ENCODE measurements at regions of chr3 and their contacts with region 1.

Region 1: GRCh38 chr3:71130471-71131374 is 452.8 kb downstream of the FOXP1 start:
- DNase-seq: peak; percentile 83
- ATAC-seq: peak; percentile 66
- H3K4me3 ChIP-seq: peak overlapping the region; percentile 64
- H3K27ac ChIP-seq: peak overlapping the region; percentile 99
- H3K4me1 ChIP-seq: peaks cover 11% of the 10 kb centered on the region
- H3K27me3 ChIP-seq: no peaks in the 10 kb centered on the region
- CTCF ChIP-seq: no peak
- POLR2A ChIP-seq: peak; percentile 64; the same call in 1 of the 2 replicates
- RAD21 ChIP-seq: peak; percentile 27; the same call in 1 of the 2 replicates

Region 2: DNA sequence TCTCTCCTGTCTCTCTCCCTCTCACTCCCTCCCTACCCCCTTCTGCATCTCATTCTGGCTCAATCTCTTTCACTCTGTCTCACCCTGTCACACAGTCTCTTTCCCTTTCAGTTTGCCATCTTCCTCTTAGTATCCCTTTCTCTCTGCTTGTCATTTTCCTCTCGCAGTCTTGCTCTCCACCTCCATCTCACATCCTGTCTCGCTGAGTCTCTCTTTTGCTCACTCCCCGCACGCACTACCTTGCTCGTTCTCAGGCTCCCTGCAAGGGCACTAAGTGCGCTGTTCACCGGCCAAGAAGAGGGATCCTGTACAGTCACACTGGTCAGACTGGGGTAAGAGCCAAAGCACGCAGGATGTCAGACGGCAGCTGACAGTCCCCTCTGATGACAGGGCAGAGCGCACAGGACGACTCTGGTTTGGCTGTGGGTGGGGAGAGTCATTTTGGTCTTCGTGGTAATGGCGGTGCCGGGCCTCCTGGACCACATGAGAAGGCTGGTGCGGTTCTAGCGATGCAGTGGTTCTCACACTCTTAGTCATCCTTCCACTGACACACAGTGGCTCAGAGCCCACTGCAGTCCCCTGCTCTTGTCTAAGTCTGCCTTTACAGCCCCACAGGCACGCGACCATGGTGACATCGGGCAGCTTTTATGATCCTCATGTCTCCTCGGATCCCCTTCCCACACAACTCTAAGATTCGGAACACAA is 96.0 kb after region 1 on chr3:
- CTCF ChIA-PET with region 1: no interaction called
- POLR2A ChIA-PET with region 1: no interaction called
- dilution Hi-C with region 1: no loop called
- in situ Hi-C with region 1: no loop called
- intact Hi-C with region 1: loop called (anchors 5 kb)
- DNase-seq: peak; percentile 82
- ATAC-seq: peak; percentile 55
- H3K4me3 ChIP-seq: peak overlapping the region; percentile 35
- H3K27ac ChIP-seq: peak overlapping the region; percentile 97
- H3K4me1 ChIP-seq: peaks cover 22% of the 10 kb centered on the region
- H3K27me3 ChIP-seq: no peaks in the 10 kb centered on the region
- CTCF ChIP-seq: no peak
- POLR2A ChIP-seq: 0 out of 2 replicates have a peak, but pooled peaks have one; percentile 13
- RAD21 ChIP-seq: no peak

Region 3: DNA sequence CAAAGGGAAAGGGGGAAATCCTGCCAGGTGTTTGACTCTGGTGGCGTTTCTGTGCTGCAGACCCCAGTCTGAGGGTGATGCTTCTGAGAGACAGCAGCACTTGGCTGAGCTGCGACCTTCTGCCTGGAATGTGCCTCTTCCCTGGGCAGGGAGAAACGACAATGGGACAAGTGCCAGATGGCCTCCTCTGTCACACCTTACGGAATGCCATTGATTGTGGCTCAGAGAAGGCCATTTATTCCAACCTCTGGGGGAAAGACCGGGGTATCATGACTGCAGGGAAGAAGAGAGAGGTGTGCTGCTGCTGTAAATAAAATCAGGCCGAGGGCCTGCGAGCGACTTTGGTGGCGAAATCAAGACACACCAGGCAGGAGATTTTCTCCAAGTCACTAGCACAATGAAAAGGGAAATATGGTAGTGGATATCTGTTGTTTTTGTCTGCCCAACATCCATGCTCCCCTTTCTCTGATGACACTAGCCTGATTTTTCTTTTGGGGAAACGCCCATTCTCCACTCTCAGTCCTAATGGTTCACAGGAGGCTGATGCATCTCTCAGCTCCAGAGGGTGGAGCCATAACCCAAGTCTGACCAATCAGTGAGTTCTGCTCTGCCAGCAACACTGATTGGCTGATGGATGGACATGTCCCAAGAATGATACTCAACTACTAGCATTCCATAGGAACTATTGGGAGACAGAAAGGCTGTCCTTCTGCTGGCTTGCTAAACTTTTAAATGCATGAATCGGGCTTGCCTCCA is 116.7 kb after region 1 on chr3:
- CTCF ChIA-PET with region 1: no interaction called
- POLR2A ChIA-PET with region 1: no interaction called
- dilution Hi-C with region 1: no loop called
- in situ Hi-C with region 1: no loop called
- intact Hi-C with region 1: loop called (anchors 1 kb)
- DNase-seq: peak; percentile 67
- ATAC-seq: 0 out of 2 replicates have a peak, but pooled peaks have one; percentile 8
- H3K4me3 ChIP-seq: no peak overlapping the region
- H3K27ac ChIP-seq: 0 out of 2 replicates have a peak overlapping the region, but pooled peaks have one; percentile 1
- H3K4me1 ChIP-seq: peaks cover 23% of the 10 kb centered on the region
- H3K27me3 ChIP-seq: no peaks in the 10 kb centered on the region
- CTCF ChIP-seq: no peak
- POLR2A ChIP-seq: no peak
- RAD21 ChIP-seq: no peak

Measured in IMR-90 (cell line).